Naive thymus-derived CD4-positive, alpha-beta T cell (primary cell): ENCODE measurements at regions of chr12 and their contacts with region 1.

Region 1: DNA sequence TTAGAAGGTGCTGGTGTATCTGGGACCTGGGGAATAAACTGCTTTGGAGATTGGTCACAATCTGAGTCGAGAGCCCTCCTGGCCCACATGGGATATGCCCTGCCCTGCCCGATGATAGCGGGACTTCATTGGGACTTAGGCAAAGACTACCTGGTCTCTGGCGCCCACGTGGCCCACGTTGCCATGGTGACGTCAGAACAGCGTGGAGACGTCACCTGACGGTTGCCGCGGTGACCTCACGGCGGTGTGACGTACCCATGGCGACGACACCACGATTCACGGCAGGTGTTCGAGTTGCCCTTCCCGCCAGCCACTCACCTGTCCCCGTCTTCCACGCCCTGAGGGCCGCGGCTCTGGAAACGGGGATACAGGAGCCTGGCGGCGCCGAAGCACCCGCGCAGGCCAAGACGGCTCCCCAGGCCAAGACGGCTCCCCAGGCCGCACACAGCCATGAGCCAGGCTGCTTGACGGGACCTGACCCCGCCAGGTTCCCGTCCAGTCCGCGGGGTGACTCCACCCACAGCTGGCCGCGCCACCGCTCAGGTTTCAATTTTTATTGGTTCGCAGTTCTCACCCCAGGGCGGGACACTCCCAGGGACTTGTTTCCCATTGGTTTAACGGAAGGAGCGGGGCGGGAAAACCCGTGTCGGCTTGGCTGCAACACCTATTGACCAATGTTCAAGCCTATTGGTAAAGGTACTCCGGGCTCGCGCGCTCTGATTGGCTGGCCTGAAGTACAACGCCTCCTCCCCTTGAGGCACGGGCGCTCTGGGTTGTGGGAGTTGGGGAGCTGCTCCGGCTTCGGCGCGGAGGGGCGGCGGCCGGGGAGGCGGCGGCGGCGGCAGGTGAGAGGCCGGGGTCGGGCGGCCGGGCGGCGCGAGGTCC is at the starts of genes MMAB and MVK:
- DNase-seq: peak; percentile 87 to 99 (median 99)
- ATAC-seq: peak; percentile 97
- H3K4me3 ChIP-seq: peak within 1 kb of the TSS; percentile 75
- H3K4me3 Mint-ChIP-seq: peak within 1 kb of the TSS; percentile 90 to 97 (median 94)
- H3K27ac ChIP-seq: peak within 1 kb of the TSS; percentile 95
- H3K27ac Mint-ChIP-seq: peak within 1 kb of the TSS; percentile 87 to 100 (median 95)
- H3K4me1 ChIP-seq: peaks cover 13 to 16% of the 10 kb centered on the region in 2 donors
- H3K4me1 Mint-ChIP-seq: peaks cover 9 to 39% (median 36%) of the 10 kb centered on the region in 7 donors
- H3K27me3 ChIP-seq: no peaks in the 10 kb centered on the region
- H3K27me3 Mint-ChIP-seq: no peaks in the 10 kb centered on the region
- total RNA-seq, gene MMAB: 13.5 to 24.7 (median 20.1) TPM
- total RNA-seq, gene MVK: 10.0 to 14.8 (median 11.7) TPM

Region 2: GRCh38 chr12:109052414-109053323 is 520.6 kb before region 1 on chr12 and contains the start of gene USP30:
- CTCF ChIA-PET with region 1: no interaction called
- POLR2A ChIA-PET with region 1: no interaction called
- intact Hi-C with region 1: loop called in 1 of 2 experiments (anchors 1 kb)
- DNase-seq: peak; percentile 68 to 86 (median 77)
- ATAC-seq: peak; percentile 93
- H3K4me3 ChIP-seq: peak within 1 kb of the TSS; percentile 91
- H3K4me3 Mint-ChIP-seq: peak within 1 kb of the TSS; percentile 86 to 99 (median 96)
- H3K27ac ChIP-seq: peak within 1 kb of the TSS; percentile 89
- H3K27ac Mint-ChIP-seq: peak within 1 kb of the TSS; percentile 89 to 98 (median 95)
- H3K4me1 ChIP-seq: peaks cover 13% of the 10 kb centered on the region in 2 donors
- H3K4me1 Mint-ChIP-seq: peaks cover 14 to 27% (median 17%) of the 10 kb centered on the region in 7 donors
- H3K27me3 ChIP-seq: no peaks in the 10 kb centered on the region
- H3K27me3 Mint-ChIP-seq: no peaks in the 10 kb centered on the region
- total RNA-seq, gene USP30: 7.8 to 15.7 (median 12.9) TPM

Region 3: GRCh38 chr12:109154451-109155438 is 418.5 kb before region 1 on chr12:
- CTCF ChIA-PET with region 1: interaction called, 5 read pairs
- POLR2A ChIA-PET with region 1: no interaction called
- intact Hi-C with region 1: loop called in 1 of 2 experiments (anchors 1 kb)
- DNase-seq: peak; percentile 58 to 87 (median 76)
- ATAC-seq: peak; percentile 99
- H3K4me3 ChIP-seq: peak overlapping the region; percentile 73
- H3K4me3 Mint-ChIP-seq: peak overlapping the region; percentile 85 to 98 (median 95)
- H3K27ac ChIP-seq: peak overlapping the region; percentile 61
- H3K27ac Mint-ChIP-seq: peak overlapping the region; percentile 71 to 95 (median 87)
- H3K4me1 ChIP-seq: peaks cover 5 to 10% of the 10 kb centered on the region in 2 donors
- H3K4me1 Mint-ChIP-seq: peaks cover 13 to 33% (median 19%) of the 10 kb centered on the region in 7 donors
- H3K27me3 ChIP-seq: no peaks in the 10 kb centered on the region
- H3K27me3 Mint-ChIP-seq: peaks cover 0 to 19% (median 0%) of the 10 kb centered on the region in 5 donors

Region 4: DNA sequence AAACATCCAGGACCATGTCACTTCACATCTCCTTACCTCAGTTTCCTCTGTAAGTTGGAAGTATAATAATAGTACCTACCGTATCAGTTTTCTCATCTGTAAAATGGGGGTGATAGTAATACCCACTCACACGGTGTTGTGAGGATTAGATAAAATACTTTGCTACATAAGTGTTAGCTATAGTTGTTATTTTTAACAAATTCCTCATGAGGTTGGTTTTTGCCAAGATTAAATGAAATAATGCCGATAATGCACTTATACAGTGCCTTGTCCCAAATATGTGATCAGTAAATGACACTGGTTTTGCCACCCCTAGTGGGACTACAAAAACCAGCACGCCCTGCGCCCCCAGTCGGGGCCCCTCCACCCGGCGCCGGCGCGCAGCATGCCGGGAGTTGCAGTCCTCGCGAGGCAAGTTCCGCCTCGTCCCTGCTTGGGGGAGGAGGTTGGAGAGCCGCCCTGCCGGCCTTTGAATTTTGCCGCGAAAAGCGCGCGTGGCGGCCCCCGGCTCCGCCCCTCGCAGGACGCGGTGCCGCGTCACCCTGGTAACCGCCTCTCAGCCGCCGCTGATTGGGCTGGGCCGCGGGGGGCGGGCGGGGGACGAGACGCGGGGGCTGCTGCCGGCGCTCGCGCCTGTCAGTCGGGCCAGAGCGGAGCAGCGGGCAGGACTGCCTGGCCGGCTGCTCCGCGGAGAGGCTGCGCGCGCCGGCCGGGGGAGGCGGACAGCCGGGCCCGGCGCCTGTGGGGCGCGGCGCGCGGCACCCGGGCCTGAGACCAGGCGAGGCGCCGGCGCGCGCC is 140.1 kb after region 1 on chr12 and contains the start of gene FAM222A:
- CTCF ChIA-PET with region 1: no interaction called
- POLR2A ChIA-PET with region 1: no interaction called
- intact Hi-C with region 1: loop called (anchors 1 kb)
- DNase-seq: peak; percentile 94 to 99 (median 98)
- ATAC-seq: peak; percentile 94
- H3K4me3 ChIP-seq: peak within 1 kb of the TSS; percentile 41
- H3K4me3 Mint-ChIP-seq: peak within 1 kb of the TSS; percentile 57 to 81 (median 72)
- H3K27ac ChIP-seq: peak within 1 kb of the TSS; percentile 55
- H3K27ac Mint-ChIP-seq: peak within 1 kb of the TSS in 1 of 9 donors; percentile 48
- H3K4me1 ChIP-seq: peaks cover 3 to 11% of the 10 kb centered on the region in 2 donors
- H3K4me1 Mint-ChIP-seq: peaks cover 0 to 4% (median 0%) of the 10 kb centered on the region in 7 donors
- H3K27me3 ChIP-seq: peaks cover 0 to 6% of the 10 kb centered on the region in 2 donors
- H3K27me3 Mint-ChIP-seq: peaks cover 29 to 65% (median 30%) of the 10 kb centered on the region in 5 donors
- total RNA-seq, gene FAM222A: 0.24 to 1.6 (median 0.80) TPM

Region 5: DNA sequence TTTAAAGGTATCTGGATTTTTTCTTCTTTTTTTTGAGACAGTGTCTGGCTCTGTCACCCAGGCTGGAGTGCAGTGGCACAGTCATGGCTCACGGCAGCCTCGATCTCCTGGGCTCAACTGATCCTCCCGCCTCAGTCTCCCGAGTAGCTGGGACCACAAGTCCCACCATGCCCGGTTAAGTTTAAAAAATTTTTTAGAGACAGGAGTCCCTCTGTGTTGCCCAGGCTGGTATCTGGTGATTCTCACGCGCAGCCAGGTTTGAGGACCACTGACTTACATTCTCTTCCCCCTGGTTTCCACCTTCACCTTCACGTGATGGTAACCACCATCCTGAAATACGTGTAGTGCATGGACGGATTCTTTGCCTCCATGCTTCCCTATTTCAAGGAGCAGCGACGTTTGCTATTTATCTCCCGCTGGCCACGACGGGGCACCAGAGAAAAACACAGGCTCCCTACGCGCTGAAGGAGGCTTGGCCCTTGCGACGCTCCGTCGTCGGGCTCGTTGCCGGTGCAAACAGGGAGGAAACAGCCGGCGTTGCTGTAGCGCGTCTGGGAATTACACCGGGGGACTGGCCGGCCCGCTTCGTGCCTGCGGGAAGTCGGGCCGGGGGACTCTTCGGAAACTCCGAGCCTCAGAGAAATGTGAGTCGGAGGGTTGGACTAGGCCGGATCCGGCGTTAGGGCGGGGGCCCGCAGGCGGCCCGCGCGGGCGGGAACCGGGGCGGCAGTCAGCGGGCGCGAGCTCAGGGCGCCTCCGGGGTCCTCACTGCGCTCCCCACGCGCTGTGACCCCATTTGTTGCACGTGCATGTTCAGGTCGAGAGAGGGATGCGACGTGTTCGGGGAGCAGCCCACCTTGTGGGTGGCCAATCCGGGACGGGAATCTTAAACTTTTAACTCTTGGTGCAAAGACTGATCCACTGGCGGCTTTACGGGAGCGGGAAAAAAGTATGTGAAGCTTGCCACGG is 326.8 kb after region 1 on chr12 and contains the start of gene TCHP:
- CTCF ChIA-PET with region 1: no interaction called
- POLR2A ChIA-PET with region 1: no interaction called
- intact Hi-C with region 1: loop called in 1 of 2 experiments (anchors 1 kb)
- DNase-seq: peak; percentile 58 to 79 (median 75)
- ATAC-seq: peak; percentile 97
- H3K4me3 ChIP-seq: peak within 1 kb of the TSS; percentile 90
- H3K4me3 Mint-ChIP-seq: peak within 1 kb of the TSS; percentile 88 to 98 (median 93)
- H3K27ac ChIP-seq: peak within 1 kb of the TSS; percentile 74
- H3K27ac Mint-ChIP-seq: peak within 1 kb of the TSS; percentile 88 to 99 (median 93)
- H3K4me1 ChIP-seq: peaks cover 15 to 17% of the 10 kb centered on the region in 2 donors
- H3K4me1 Mint-ChIP-seq: peaks cover 17 to 33% (median 22%) of the 10 kb centered on the region in 7 donors
- H3K27me3 ChIP-seq: no peaks in the 10 kb centered on the region
- H3K27me3 Mint-ChIP-seq: no peaks in the 10 kb centered on the region
- total RNA-seq, gene TCHP: 21.7 to 40.0 (median 31.8) TPM

Region 6: GRCh38 chr12:110613771-110614684 is 1040.8 kb after region 1 on chr12 and contains the start of gene TCTN1:
- CTCF ChIA-PET with region 1: no interaction called
- POLR2A ChIA-PET with region 1: no interaction called
- intact Hi-C with region 1: no loop called
- DNase-seq: peak; percentile 88 to 98 (median 93)
- ATAC-seq: peak; percentile 100
- H3K4me3 ChIP-seq: peak within 1 kb of the TSS; percentile 75
- H3K4me3 Mint-ChIP-seq: peak within 1 kb of the TSS; percentile 81 to 89 (median 88)
- H3K27ac ChIP-seq: peak within 1 kb of the TSS; percentile 87
- H3K27ac Mint-ChIP-seq: peak within 1 kb of the TSS; percentile 31 to 92 (median 87)
- H3K4me1 ChIP-seq: peaks cover 4 to 6% of the 10 kb centered on the region in 2 donors
- H3K4me1 Mint-ChIP-seq: peaks cover 0 to 10% (median 4%) of the 10 kb centered on the region in 7 donors
- H3K27me3 ChIP-seq: no peaks in the 10 kb centered on the region
- H3K27me3 Mint-ChIP-seq: no peaks in the 10 kb centered on the region
- total RNA-seq, gene TCTN1: 5.2 to 13.0 (median 10.2) TPM